T-cell (primary cell): ENCODE measurements at regions of chr2 and their contacts with region 1.

Region 1: DNA sequence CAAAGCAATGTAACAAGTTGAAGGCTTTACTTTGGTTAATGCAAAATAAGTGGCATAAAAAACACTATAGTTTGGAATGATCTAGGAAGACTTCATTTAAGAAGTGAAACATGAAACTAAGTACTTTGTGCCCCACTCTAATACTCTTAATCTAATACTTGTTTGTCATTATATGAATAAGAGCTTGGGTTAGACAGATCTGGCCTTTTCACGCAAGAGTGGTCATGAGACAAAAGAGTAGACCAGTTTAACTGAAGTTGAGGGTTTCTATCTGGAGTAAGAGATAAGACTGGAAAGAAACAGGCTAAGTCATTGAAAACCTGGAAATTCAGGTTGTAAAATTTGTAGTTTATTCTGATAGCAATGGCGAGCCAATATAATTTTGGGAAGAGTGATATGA is 2.8 kb downstream of the SLC30A6 start:
- DNase-seq: no peak
- ATAC-seq: no peak
- H3K4me3 ChIP-seq: no peak overlapping the region
- H3K4me3 Mint-ChIP-seq: no peak overlapping the region
- H3K27ac ChIP-seq: no peak overlapping the region
- H3K27ac Mint-ChIP-seq: no peak overlapping the region
- H3K4me1 ChIP-seq: peaks cover 5 to 9% of the 10 kb centered on the region in 2 experiments
- H3K4me1 Mint-ChIP-seq: peaks cover 41 to 56% (median 51%) of the 10 kb centered on the region in 3 donors
- H3K27me3 ChIP-seq: no peaks in the 10 kb centered on the region
- H3K27me3 Mint-ChIP-seq: no peaks in the 10 kb centered on the region

Region 2: DNA sequence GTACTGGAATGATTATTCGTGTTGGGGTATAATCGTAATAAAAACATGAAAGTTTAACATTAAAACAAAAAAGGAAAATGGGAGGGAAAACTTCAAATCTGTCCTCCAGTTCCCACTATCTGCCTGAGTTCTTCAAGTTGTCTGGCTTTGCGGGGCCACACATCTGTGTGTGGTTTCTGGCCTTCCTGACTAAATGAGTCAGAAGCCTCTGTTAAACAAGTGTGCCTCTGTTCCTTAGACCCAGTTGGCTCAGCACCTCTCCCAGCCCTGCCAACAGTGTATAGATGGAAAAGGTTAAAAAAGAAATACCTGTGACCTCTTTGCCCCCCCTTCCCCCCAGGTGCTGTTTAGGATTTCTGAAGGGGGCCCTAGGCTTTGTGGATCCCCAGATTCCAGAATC is 784.2 kb before region 1 on chr2:
- CTCF ChIA-PET with region 1: no interaction called
- POLR2A ChIA-PET with region 1: no interaction called
- DNase-seq: no peak
- ATAC-seq: no peak
- H3K4me3 ChIP-seq: no peak overlapping the region
- H3K4me3 Mint-ChIP-seq: no peak overlapping the region
- H3K27ac ChIP-seq: no peak overlapping the region
- H3K27ac Mint-ChIP-seq: no peak overlapping the region
- H3K4me1 ChIP-seq: no peaks in the 10 kb centered on the region
- H3K4me1 Mint-ChIP-seq: peaks cover 0 to 8% (median 4%) of the 10 kb centered on the region in 3 donors
- H3K27me3 ChIP-seq: peaks cover 0 to 10% of the 10 kb centered on the region in 2 experiments
- H3K27me3 Mint-ChIP-seq: peaks cover 0 to 2% of the 10 kb centered on the region in 2 donors

Region 3: DNA sequence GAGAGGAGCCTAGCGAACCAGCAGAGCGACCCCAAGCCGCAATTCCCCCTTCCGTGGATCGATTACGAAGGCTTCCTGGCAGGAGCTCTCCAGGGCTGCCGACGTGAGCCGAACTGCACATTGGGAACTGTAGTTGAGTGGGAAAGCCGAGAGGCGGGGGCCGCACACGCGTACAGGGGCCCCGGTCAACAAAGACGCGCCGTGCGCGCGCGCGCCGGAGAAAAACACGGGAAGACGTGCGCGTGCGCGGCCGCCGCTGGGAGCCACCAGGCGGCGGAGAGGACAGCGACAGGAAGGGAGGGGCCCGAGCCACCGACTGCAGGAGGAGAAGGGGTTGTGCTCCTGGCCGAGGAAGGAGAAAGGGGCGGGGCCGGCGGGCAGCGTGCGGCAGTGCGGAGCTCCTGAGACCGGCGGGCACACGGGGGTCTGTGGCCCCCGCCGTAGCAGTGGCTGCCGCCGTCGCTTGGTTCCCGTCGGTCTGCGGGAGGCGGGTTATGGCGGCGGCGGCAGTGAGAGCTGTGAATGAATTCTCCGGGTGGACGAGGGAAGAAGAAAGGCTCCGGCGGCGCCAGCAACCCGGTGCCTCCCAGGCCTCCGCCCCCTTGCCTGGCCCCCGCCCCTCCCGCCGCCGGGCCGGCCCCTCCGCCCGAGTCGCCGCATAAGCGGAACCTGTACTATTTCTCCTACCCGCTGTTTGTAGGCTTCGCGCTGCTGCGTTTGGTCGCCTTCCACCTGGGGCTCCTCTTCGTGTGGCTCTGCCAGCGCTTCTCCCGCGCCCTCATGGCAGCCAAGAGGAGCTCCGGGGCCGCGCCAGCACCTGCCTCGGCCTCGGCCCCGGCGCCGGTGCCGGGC is 105.0 kb before region 1 on chr2 and contains the start of gene SPAST:
- CTCF ChIA-PET with region 1: interaction called in 1 of 2 experiments, 9 read pairs
- POLR2A ChIA-PET with region 1: interaction called in 1 of 2 experiments, 11 read pairs
- DNase-seq: peak; percentile 91 to 97 (median 94)
- ATAC-seq: peak; percentile 88 to 92 (median 91)
- H3K4me3 ChIP-seq: peak within 1 kb of the TSS; percentile 83 to 85
- H3K4me3 Mint-ChIP-seq: peak within 1 kb of the TSS; percentile 97 to 99 (median 98)
- H3K27ac ChIP-seq: peak within 1 kb of the TSS; percentile 70
- H3K27ac Mint-ChIP-seq: peak within 1 kb of the TSS; percentile 94 to 98
- H3K4me1 ChIP-seq: peaks cover 16 to 21% of the 10 kb centered on the region in 2 experiments
- H3K4me1 Mint-ChIP-seq: peaks cover 41 to 43% (median 42%) of the 10 kb centered on the region in 3 donors
- H3K27me3 ChIP-seq: no peaks in the 10 kb centered on the region
- H3K27me3 Mint-ChIP-seq: no peaks in the 10 kb centered on the region
- total RNA-seq, gene SPAST: 17.7 to 21.9 (median 19.9) TPM

Region 4: DNA sequence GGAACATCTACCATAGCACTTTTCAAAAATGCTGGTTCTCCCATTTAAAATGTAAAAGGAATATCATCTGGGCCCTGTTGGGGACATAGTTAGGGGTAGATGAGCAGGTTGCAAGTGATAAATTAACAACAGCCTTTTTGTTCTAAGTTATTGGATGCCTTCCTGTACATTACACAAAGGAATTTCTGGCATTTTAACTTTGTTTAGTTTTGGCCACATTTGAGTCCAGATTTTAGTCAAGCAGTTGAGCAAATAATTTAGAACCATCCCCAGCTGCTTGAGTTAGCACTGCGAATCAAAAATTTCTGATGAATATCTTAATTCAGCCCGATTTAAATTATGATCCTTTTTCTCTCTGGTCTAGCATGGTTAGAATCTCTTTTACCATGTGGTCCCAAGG is 583.7 kb after region 1 on chr2:
- CTCF ChIA-PET with region 1: no interaction called
- POLR2A ChIA-PET with region 1: no interaction called
- DNase-seq: no peak
- ATAC-seq: no peak
- H3K4me3 ChIP-seq: no peak overlapping the region
- H3K4me3 Mint-ChIP-seq: no peak overlapping the region
- H3K27ac ChIP-seq: no peak overlapping the region
- H3K27ac Mint-ChIP-seq: no peak overlapping the region
- H3K4me1 ChIP-seq: no peaks in the 10 kb centered on the region
- H3K4me1 Mint-ChIP-seq: peaks cover 17 to 21% (median 18%) of the 10 kb centered on the region in 3 donors
- H3K27me3 ChIP-seq: no peaks in the 10 kb centered on the region
- H3K27me3 Mint-ChIP-seq: no peaks in the 10 kb centered on the region